Caco-2 (cell line): ENCODE measurements at regions of chr1 and their contacts with region 1.

Region 1: GRCh38 chr1:198232378-198232777 is 75.6 kb downstream of the NEK7 start:
- DNase-seq: no peak
- H3K4me3 ChIP-seq: no peak overlapping the region
- H3K4me3 Mint-ChIP-seq: no peak overlapping the region
- H3K27ac Mint-ChIP-seq: no peak overlapping the region
- H3K4me1 ChIP-seq: 0 out of 2 replicates have a peak, but pooled peaks cover 5% of the 10 kb centered on the region
- H3K4me1 Mint-ChIP-seq: peaks cover 16% of the 10 kb centered on the region
- H3K27me3 ChIP-seq: no peaks in the 10 kb centered on the region
- H3K27me3 Mint-ChIP-seq: no peaks in the 10 kb centered on the region
- CTCF ChIP-seq: no peak

Region 2: DNA sequence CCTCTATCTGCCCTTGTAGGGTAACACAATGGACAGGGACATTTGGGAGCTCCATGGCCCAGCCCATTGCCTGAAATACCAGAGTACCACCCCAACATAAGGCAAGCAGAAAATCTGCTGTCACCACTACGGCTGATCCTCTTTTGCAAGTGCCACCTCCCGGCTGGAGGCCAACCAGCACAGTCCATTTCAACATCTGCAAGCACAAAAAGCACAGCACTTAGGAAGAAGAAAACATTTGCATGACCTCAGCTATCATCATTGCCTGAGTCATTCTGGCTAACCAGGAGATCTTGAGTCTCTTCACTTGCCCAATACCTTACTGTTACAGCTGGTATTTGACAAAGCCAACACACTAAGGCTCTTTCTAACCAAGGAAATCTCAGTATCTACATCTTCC is 19.7 kb before region 1 on chr1:
- CTCF ChIA-PET with region 1: no interaction called
- POLR2A ChIA-PET with region 1: no interaction called
- intact Hi-C with region 1: no loop called
- DNase-seq: no peak
- H3K4me3 ChIP-seq: no peak overlapping the region
- H3K4me3 Mint-ChIP-seq: no peak overlapping the region
- H3K27ac Mint-ChIP-seq: no peak overlapping the region
- H3K4me1 ChIP-seq: no peaks in the 10 kb centered on the region
- H3K4me1 Mint-ChIP-seq: no peaks in the 10 kb centered on the region
- H3K27me3 ChIP-seq: no peaks in the 10 kb centered on the region
- H3K27me3 Mint-ChIP-seq: no peaks in the 10 kb centered on the region
- CTCF ChIP-seq: no peak

Region 3: DNA sequence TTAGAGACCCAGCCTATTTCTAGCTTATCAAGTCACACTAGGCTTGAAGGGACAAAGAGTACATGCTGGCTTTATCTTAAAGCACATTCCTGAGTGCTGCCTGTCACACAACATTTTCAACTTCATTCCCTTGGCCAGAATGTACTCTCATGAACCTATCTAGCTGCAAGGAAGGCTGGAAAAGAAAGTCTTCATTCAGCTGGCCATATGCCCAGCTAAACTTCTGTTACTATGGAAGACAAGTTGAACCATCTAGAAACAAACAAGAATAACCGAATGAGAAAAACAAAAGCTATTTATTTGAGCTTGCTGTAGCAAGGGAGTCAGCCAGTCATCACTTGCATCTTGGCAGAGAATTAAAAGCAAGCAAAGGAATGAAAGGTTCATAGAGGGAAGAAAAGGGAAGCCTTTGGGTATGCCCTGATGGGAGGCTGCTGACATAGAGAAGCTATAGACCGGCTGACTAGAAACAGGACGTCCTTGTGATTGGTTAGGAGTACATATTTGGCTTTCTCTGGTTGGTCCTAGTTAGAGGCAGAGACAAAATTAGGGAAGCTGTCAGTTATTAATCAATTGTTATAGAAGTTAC is 32.8 kb after region 1 on chr1:
- CTCF ChIA-PET with region 1: interaction called, 3 read pairs
- POLR2A ChIA-PET with region 1: no interaction called
- intact Hi-C with region 1: loop called (anchors 2 kb)
- DNase-seq: peak; percentile 37 to 43
- H3K4me3 ChIP-seq: no peak overlapping the region
- H3K4me3 Mint-ChIP-seq: peak overlapping the region; percentile 42
- H3K27ac Mint-ChIP-seq: peak overlapping the region; percentile 58
- H3K4me1 ChIP-seq: peaks cover 39% of the 10 kb centered on the region
- H3K4me1 Mint-ChIP-seq: peaks cover 10% of the 10 kb centered on the region
- H3K27me3 ChIP-seq: no peaks in the 10 kb centered on the region
- H3K27me3 Mint-ChIP-seq: no peaks in the 10 kb centered on the region
- CTCF ChIP-seq: no peak

Region 4: DNA sequence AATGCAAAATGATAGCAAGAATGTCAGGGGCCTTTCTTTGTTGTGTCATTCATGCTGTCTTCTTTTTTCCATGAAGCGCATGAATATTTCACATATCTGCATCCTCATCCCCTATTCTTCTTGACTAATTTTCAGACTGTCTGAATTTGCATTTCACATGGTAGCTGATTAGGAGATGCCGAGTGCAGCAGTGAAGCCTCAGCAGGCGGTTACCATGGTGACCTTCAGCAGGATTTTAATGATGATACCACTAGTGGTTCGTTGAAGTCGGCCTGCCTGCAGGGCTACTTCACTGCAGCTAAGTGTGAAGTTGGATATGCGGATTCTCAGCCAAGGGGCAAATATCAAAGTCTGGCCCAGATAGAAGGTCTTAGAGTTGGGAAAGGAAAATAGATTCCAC is 66.3 kb after region 1 on chr1:
- CTCF ChIA-PET with region 1: no interaction called
- POLR2A ChIA-PET with region 1: no interaction called
- intact Hi-C with region 1: no loop called
- DNase-seq: no peak
- H3K4me3 ChIP-seq: no peak overlapping the region
- H3K4me3 Mint-ChIP-seq: no peak overlapping the region
- H3K27ac Mint-ChIP-seq: no peak overlapping the region
- H3K4me1 ChIP-seq: no peaks in the 10 kb centered on the region
- H3K4me1 Mint-ChIP-seq: no peaks in the 10 kb centered on the region
- H3K27me3 ChIP-seq: no peaks in the 10 kb centered on the region
- H3K27me3 Mint-ChIP-seq: no peaks in the 10 kb centered on the region
- CTCF ChIP-seq: no peak

Region 5: GRCh38 chr1:198588845-198589244 is 356.5 kb after region 1 on chr1:
- CTCF ChIA-PET with region 1: no interaction called
- POLR2A ChIA-PET with region 1: no interaction called
- intact Hi-C with region 1: no loop called
- DNase-seq: no peak
- H3K4me3 ChIP-seq: no peak overlapping the region
- H3K4me3 Mint-ChIP-seq: no peak overlapping the region
- H3K27ac Mint-ChIP-seq: no peak overlapping the region
- H3K4me1 ChIP-seq: no peaks in the 10 kb centered on the region
- H3K4me1 Mint-ChIP-seq: no peaks in the 10 kb centered on the region
- H3K27me3 ChIP-seq: no peaks in the 10 kb centered on the region
- H3K27me3 Mint-ChIP-seq: no peaks in the 10 kb centered on the region
- CTCF ChIP-seq: no peak